IMR-90 (cell line): ENCODE measurements at regions of chr20 and their contacts with region 1.

Region 1: GRCh38 chr20:50189681-50190582 is 698 bp upstream of the CEBPB start:
- DNase-seq: peak; percentile 87
- ATAC-seq: peak; percentile 77
- H3K4me3 ChIP-seq: peak overlapping the region; percentile 95
- H3K27ac ChIP-seq: no peak overlapping the region; the same call in 1 of the 2 replicates
- H3K4me1 ChIP-seq: peaks cover 16% of the 10 kb centered on the region
- H3K27me3 ChIP-seq: no peaks in the 10 kb centered on the region
- CTCF ChIP-seq: peak; percentile 81
- POLR2A ChIP-seq: no peak
- RAD21 ChIP-seq: peak; percentile 81

Region 2: GRCh38 chr20:50224531-50225255 is 34.8 kb after region 1 on chr20:
- CTCF ChIA-PET with region 1: no interaction called
- POLR2A ChIA-PET with region 1: no interaction called
- dilution Hi-C with region 1: no loop called
- in situ Hi-C with region 1: no loop called
- intact Hi-C with region 1: loop called (anchors 2 kb)
- DNase-seq: peak; percentile 97
- ATAC-seq: peak; percentile 80
- H3K4me3 ChIP-seq: no peak overlapping the region
- H3K27ac ChIP-seq: peak overlapping the region; percentile 65
- H3K4me1 ChIP-seq: peaks cover 23% of the 10 kb centered on the region
- H3K27me3 ChIP-seq: no peaks in the 10 kb centered on the region
- CTCF ChIP-seq: peak; percentile 44
- POLR2A ChIP-seq: 0 out of 2 replicates have a peak, but pooled peaks have one; percentile 31
- RAD21 ChIP-seq: peak; percentile 30; the same call in 1 of the 2 replicates

Region 3: GRCh38 chr20:50292324-50293243 is 102.7 kb after region 1 on chr20:
- CTCF ChIA-PET with region 1: no interaction called
- POLR2A ChIA-PET with region 1: no interaction called
- dilution Hi-C with region 1: no loop called
- in situ Hi-C with region 1: no loop called
- intact Hi-C with region 1: loop called (anchors 5 kb)
- DNase-seq: peak; percentile 99
- ATAC-seq: peak; percentile 83
- H3K4me3 ChIP-seq: no peak overlapping the region
- H3K27ac ChIP-seq: peak overlapping the region; percentile 90
- H3K4me1 ChIP-seq: peaks cover 26% of the 10 kb centered on the region
- H3K27me3 ChIP-seq: no peaks in the 10 kb centered on the region
- CTCF ChIP-seq: no peak
- POLR2A ChIP-seq: peak; percentile 43; the same call in 1 of the 2 replicates
- RAD21 ChIP-seq: no peak; the same call in 1 of the 2 replicates

Region 4: GRCh38 chr20:50380641-50381040 is 190.7 kb after region 1 on chr20:
- CTCF ChIA-PET with region 1: no interaction called
- POLR2A ChIA-PET with region 1: interaction called, 4 read pairs
- dilution Hi-C with region 1: no loop called
- in situ Hi-C with region 1: loop called (anchors 5 kb)
- intact Hi-C with region 1: loop called (anchors 1 kb)
- DNase-seq: peak; percentile 65
- ATAC-seq: peak; percentile 60
- H3K4me3 ChIP-seq: no peak overlapping the region
- H3K27ac ChIP-seq: no peak overlapping the region
- H3K4me1 ChIP-seq: peaks cover 19% of the 10 kb centered on the region
- H3K27me3 ChIP-seq: no peaks in the 10 kb centered on the region
- CTCF ChIP-seq: peak; percentile 72
- POLR2A ChIP-seq: no peak
- RAD21 ChIP-seq: peak; percentile 73

Region 5: GRCh38 chr20:50434653-50435396 is 244.9 kb after region 1 on chr20:
- CTCF ChIA-PET with region 1: no interaction called
- POLR2A ChIA-PET with region 1: no interaction called
- dilution Hi-C with region 1: no loop called
- in situ Hi-C with region 1: no loop called
- intact Hi-C with region 1: no loop called
- DNase-seq: peak; percentile 86
- ATAC-seq: peak; percentile 21
- H3K4me3 ChIP-seq: no peak overlapping the region
- H3K27ac ChIP-seq: peak overlapping the region; percentile 18; the same call in 1 of the 2 replicates
- H3K4me1 ChIP-seq: peaks cover 19% of the 10 kb centered on the region
- H3K27me3 ChIP-seq: no peaks in the 10 kb centered on the region
- CTCF ChIP-seq: no peak
- POLR2A ChIP-seq: no peak
- RAD21 ChIP-seq: no peak

Region 6: DNA sequence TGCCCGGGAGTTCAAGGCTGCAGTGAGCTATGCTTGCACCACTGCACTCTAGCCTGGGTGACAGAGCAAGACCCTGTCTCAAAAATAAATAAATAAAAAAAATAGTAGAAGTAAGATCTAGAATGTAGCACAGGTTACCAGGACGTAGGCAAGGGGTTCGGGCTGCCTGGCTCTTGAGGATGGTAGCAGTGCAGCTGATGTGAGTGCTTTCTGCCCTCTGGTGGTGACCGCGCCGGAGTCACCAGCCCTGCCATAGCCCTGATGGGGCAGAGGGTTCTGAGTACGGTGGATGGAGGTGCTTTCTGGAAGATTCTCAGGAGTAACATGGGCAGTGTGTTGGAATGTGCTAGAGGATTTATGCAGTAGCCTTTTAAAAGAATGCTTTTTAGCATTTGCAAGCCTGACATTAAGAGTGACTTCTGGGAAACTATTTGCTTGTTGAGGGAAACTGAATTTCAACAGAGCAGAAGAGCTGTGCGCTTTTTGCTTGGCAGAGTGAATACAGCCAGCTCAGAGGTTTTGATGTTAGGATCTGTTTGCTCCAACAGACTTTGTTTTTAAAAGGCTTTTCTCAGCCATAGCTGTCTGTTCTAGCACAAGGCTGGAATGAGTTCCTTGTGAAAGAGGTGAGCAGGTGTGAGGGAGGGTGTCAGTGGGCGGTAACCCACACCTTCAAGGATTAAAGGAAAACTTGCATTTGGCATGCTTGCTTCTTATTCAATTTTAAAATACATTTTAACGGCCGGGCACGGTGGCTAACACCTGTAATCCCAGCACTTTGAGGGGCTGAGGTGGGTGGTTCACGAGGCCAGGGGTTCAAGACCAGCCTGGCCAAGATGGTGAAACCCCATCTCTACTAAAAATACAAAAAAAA is 386.2 kb after region 1 on chr20:
- CTCF ChIA-PET with region 1: interaction called, 4 read pairs
- POLR2A ChIA-PET with region 1: no interaction called
- dilution Hi-C with region 1: no loop called
- in situ Hi-C with region 1: loop called (anchors 5 kb)
- intact Hi-C with region 1: loop called (anchors 1 kb)
- DNase-seq: peak; percentile 51
- ATAC-seq: peak; percentile 74
- H3K4me3 ChIP-seq: no peak overlapping the region
- H3K27ac ChIP-seq: no peak overlapping the region; the same call in 1 of the 2 replicates
- H3K4me1 ChIP-seq: peaks cover 11% of the 10 kb centered on the region
- H3K27me3 ChIP-seq: no peaks in the 10 kb centered on the region
- CTCF ChIP-seq: peak; percentile 68
- POLR2A ChIP-seq: no peak
- RAD21 ChIP-seq: peak; percentile 85

Region 7: GRCh38 chr20:50790651-50791277 is 600.8 kb after region 1 on chr20:
- CTCF ChIA-PET with region 1: no interaction called
- POLR2A ChIA-PET with region 1: no interaction called
- dilution Hi-C with region 1: no loop called
- in situ Hi-C with region 1: loop called (anchors 10 kb)
- intact Hi-C with region 1: loop called (anchors 1 kb)
- DNase-seq: peak; percentile 85
- ATAC-seq: peak; percentile 79
- H3K4me3 ChIP-seq: no peak overlapping the region
- H3K27ac ChIP-seq: peak overlapping the region; percentile 77
- H3K4me1 ChIP-seq: peaks cover 17% of the 10 kb centered on the region
- H3K27me3 ChIP-seq: no peaks in the 10 kb centered on the region
- CTCF ChIP-seq: peak; percentile 82
- POLR2A ChIP-seq: peak; percentile 42; the same call in 1 of the 2 replicates
- RAD21 ChIP-seq: peak; percentile 53